Heart right ventricle (tissue), 16 donors: ENCODE measurements at regions of chr4 and their contacts with region 1.

Region 1: GRCh38 chr4:176185067-176185466 is 10.3 kb downstream of the SPATA4 start:
- DNase-seq: no peak
- ATAC-seq: peak; percentile 43 to 93 (median 74)
- H3K4me3 ChIP-seq: no peak overlapping the region
- H3K27ac ChIP-seq: peak overlapping the region in 1 of 10 donors; percentile 25
- H3K4me1 ChIP-seq: no peaks in the 10 kb centered on the region
- H3K27me3 ChIP-seq: no peaks in the 10 kb centered on the region
- CTCF ChIP-seq: no peak

Region 2: DNA sequence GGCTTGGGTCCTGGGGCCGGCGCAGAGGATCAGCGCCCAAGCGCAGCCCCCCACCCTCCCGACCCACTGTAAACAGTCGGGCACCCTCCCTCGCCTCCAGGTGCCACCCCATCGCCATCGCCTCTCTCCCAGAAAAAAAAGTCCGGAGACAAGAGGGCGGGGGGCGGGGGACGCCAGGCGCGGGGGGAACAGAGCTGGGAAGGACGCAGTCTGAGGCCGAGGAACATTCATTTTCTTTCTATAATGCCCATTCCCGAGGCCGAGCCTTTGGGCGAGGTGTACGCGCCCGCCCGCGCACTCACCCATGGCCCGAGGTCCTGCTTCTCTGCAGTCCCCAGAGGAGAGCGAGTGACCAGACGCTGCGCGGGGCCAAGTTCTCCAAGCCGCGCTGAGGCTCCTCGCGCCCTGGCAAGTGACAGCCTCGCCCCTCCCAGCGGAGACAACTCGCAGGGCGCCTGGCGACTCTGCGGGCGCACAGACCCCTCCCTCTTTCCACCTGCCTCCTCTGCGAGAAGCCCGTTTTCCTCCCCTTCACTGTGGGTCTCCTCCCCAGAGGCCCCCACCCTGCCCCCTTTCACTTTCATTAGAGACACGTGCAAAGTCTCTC is 183.0 kb before region 1 on chr4:
- intact Hi-C with region 1: no loop called
- DNase-seq: peak in 1 of 2 donors; percentile 14
- ATAC-seq: peak in 3 of 8 donors; percentile 28 to 62 (median 42)
- H3K4me3 ChIP-seq: peak overlapping the region; percentile 10 to 56 (median 48)
- H3K27ac ChIP-seq: no peak overlapping the region
- H3K4me1 ChIP-seq: peaks cover 0 to 17% (median 12%) of the 10 kb centered on the region in 9 donors
- H3K27me3 ChIP-seq: peaks cover 0 to 57% (median 38%) of the 10 kb centered on the region in 7 donors
- CTCF ChIP-seq: no peak

Region 3: DNA sequence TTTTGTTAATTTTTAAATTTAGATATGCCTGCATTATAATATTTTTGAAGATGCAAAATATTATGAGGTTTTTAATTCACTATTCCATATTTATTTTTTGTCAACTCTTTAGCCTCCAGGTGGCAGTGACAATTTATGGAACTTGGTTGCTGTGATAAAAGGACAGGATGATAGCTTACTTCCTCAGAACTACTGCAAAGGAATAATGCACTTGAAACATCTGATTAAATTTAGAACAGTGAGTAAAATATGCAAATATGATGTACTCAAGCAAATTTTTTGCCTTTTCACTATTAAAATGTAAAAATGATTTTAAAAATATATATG is 34.7 kb before region 1 on chr4:
- intact Hi-C with region 1: loop called in 1 of 10 experiments (anchors 1 kb)
- DNase-seq: no peak
- ATAC-seq: peak in 2 of 8 donors; percentile 61 to 64
- H3K4me3 ChIP-seq: no peak overlapping the region
- H3K27ac ChIP-seq: no peak overlapping the region
- H3K4me1 ChIP-seq: no peaks in the 10 kb centered on the region
- H3K27me3 ChIP-seq: no peaks in the 10 kb centered on the region
- CTCF ChIP-seq: peak; percentile 13 to 68 (median 44)

Region 4: GRCh38 chr4:176319704-176320339 is 134.8 kb after region 1 on chr4 and contains the start of gene SPCS3:
- intact Hi-C with region 1: loop called in 3 of 10 experiments (anchors 5 to 10 kb)
- DNase-seq: peak; percentile 95 to 96
- ATAC-seq: peak; percentile 97 to 100 (median 99)
- H3K4me3 ChIP-seq: peak within 1 kb of the TSS; percentile 40 to 87 (median 78)
- H3K27ac ChIP-seq: peak within 1 kb of the TSS; percentile 88 to 99 (median 97)
- H3K4me1 ChIP-seq: peaks cover 0 to 53% (median 42%) of the 10 kb centered on the region in 9 donors
- H3K27me3 ChIP-seq: no peaks in the 10 kb centered on the region
- CTCF ChIP-seq: no peak
- total RNA-seq, gene SPCS3: 74.1 to 122 (median 90.9) TPM